Mammary epithelial cell (primary cell): ENCODE measurements at regions of chr5 and their contacts with region 1.

Region 1: DNA sequence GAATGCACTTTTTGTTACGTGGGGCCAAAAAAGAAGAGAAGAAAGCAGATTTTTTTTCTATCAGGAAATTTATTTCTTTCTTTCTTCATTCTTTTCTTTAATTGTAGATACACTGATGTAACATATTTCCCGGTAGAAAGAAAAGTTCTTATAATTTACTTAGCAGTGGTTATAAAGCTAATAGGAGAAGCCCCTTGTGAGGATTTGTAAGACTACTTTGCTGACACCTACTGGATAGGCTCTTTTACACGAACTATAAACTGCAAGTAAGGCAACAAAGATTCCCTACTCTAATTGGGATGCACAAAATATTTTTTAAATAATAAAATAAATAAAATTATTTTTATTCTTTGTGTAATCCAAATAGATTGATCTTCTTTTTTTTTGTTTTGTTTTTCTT is 284.4 kb downstream of the DNAH5 start:
- DNase-seq: no peak
- H3K4me3 ChIP-seq: no peak overlapping the region
- H3K27ac ChIP-seq: no peak overlapping the region
- H3K4me1 ChIP-seq: peaks cover 56% of the 10 kb centered on the region
- H3K27me3 ChIP-seq: no peaks in the 10 kb centered on the region
- CTCF ChIP-seq: peak; percentile 28 to 49

Region 2: GRCh38 chr5:12995466-12995865 is 664.6 kb before region 1 on chr5:
- CTCF ChIA-PET with region 1: no interaction called
- dilution Hi-C with region 1: no loop called
- in situ Hi-C with region 1: no loop called
- intact Hi-C with region 1: no loop called
- DNase-seq: no peak
- H3K4me3 ChIP-seq: no peak overlapping the region
- H3K27ac ChIP-seq: no peak overlapping the region
- H3K4me1 ChIP-seq: no peaks in the 10 kb centered on the region
- H3K27me3 ChIP-seq: no peaks in the 10 kb centered on the region
- CTCF ChIP-seq: no peak

Region 3: DNA sequence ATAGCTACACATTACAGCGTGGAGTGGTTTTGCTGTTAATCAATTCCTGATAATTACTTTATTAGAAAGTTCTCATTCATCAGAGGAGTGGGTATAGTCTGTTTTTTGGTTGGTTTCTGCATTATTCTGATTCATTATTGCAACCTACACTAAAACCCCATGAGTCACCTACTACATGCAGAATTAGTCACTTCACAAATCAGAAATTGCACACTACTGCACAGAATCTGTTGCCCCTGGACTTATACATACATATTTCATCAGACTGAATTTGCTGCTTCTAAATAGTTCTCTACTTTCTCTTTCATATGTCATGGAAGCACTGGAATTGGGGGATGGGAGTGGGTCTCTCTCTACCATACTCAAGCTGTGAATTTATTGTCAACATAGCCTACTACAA is 300.7 kb before region 1 on chr5:
- CTCF ChIA-PET with region 1: no interaction called
- dilution Hi-C with region 1: no loop called
- in situ Hi-C with region 1: no loop called
- intact Hi-C with region 1: loop called (anchors 5 kb)
- DNase-seq: peak; percentile 83
- H3K4me3 ChIP-seq: no peak overlapping the region
- H3K27ac ChIP-seq: no peak overlapping the region
- H3K4me1 ChIP-seq: peaks cover 4% of the 10 kb centered on the region
- H3K27me3 ChIP-seq: no peaks in the 10 kb centered on the region
- CTCF ChIP-seq: no peak

Region 4: GRCh38 chr5:13566871-13567339 is 93.2 kb before region 1 on chr5:
- CTCF ChIA-PET with region 1: interaction called, 7 read pairs
- dilution Hi-C with region 1: no loop called
- in situ Hi-C with region 1: loop called in 1 of 2 experiments (anchors 10 kb)
- intact Hi-C with region 1: loop called (anchors 1 kb)
- DNase-seq: peak; percentile 97
- H3K4me3 ChIP-seq: no peak overlapping the region
- H3K27ac ChIP-seq: peak overlapping the region; percentile 98
- H3K4me1 ChIP-seq: peaks cover 32% of the 10 kb centered on the region
- H3K27me3 ChIP-seq: no peaks in the 10 kb centered on the region
- CTCF ChIP-seq: no peak

Region 5: GRCh38 chr5:13814302-13814701 is 154.2 kb after region 1 on chr5:
- CTCF ChIA-PET with region 1: no interaction called
- dilution Hi-C with region 1: no loop called
- in situ Hi-C with region 1: no loop called
- intact Hi-C with region 1: loop called (anchors 5 kb)
- DNase-seq: peak; percentile 33
- H3K4me3 ChIP-seq: no peak overlapping the region
- H3K27ac ChIP-seq: no peak overlapping the region
- H3K4me1 ChIP-seq: peaks cover 2% of the 10 kb centered on the region
- H3K27me3 ChIP-seq: no peaks in the 10 kb centered on the region
- CTCF ChIP-seq: peak; percentile 22 to 47

Region 6: GRCh38 chr5:13957032-13957645 is 297.1 kb after region 1 on chr5:
- CTCF ChIA-PET with region 1: no interaction called
- dilution Hi-C with region 1: no loop called
- in situ Hi-C with region 1: no loop called
- intact Hi-C with region 1: loop called (anchors 2 kb)
- DNase-seq: peak; percentile 59
- H3K4me3 ChIP-seq: no peak overlapping the region
- H3K27ac ChIP-seq: no peak overlapping the region
- H3K4me1 ChIP-seq: no peaks in the 10 kb centered on the region
- H3K27me3 ChIP-seq: no peaks in the 10 kb centered on the region
- CTCF ChIP-seq: peak; percentile 77 to 80